Activated CD4-positive, alpha-beta memory T cell treated with anti-CD3 and anti-CD28 coated beads, Interleukin-2, amount 10 ng/mL, durations not matched to agents 7 days and 5 days (primary cell): ENCODE measurements at regions of chr13 and their contacts with region 1.

Region 1: GRCh38 chr13:39051157-39051556 is 12.9 kb downstream of the NHLRC3 start:
- DNase-seq: no peak
- H3K4me3 Mint-ChIP-seq: no peak overlapping the region
- H3K27ac Mint-ChIP-seq: no peak overlapping the region
- H3K4me1 Mint-ChIP-seq: no peaks in the 10 kb centered on the region
- H3K27me3 Mint-ChIP-seq: no peaks in the 10 kb centered on the region

Region 2: GRCh38 chr13:39612023-39612637 is 561.0 kb after region 1 on chr13:
- CTCF ChIA-PET with region 1: interaction called, 13 read pairs
- POLR2A ChIA-PET with region 1: no interaction called
- DNase-seq: peak; percentile 51
- H3K4me3 Mint-ChIP-seq: no peak overlapping the region
- H3K27ac Mint-ChIP-seq: no peak overlapping the region
- H3K4me1 Mint-ChIP-seq: no peaks in the 10 kb centered on the region
- H3K27me3 Mint-ChIP-seq: peaks cover 14% of the 10 kb centered on the region